CD4-positive, alpha-beta T cell (primary cell): ENCODE measurements at regions of chr3 and their contacts with region 1.

Region 1: DNA sequence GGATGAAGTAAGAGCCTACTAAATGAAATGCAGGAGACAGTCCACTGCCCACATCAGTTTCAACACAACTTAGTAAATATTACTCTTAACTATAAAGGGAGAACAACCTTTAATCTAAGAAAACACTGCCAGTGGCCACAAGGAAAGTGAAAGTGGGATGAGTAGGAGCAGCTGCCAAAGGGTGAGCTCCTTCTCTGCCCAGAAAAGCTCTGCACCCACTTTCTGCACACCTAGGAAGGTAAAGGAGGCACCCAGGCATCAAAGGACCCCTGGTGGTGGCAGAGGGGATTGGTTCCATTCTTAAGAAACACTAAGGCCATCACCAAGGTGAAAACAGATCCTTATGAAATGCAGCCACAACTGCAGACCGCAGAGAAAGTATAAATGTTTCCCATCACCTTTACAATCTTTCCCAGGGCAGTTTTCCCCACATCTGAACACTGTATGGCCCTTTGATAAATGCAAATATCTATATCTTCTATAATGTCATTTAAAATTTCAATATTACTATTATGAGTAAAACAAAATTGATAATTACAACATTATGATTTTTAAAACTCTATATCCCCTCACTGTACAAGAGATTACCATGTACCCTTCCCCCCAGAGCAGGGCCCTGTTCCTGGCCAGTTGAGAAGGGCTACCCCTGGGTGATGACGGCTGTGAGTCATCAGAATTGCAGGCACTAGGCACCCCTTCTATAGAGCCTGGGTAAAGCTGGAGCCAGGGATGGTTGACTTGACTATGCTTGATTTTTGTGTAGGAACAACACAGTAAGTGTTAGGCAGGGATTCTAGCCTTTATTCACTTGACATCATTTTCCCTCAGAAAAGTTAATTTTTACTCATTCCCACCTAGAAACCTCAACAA is 92.0 kb downstream of the SNRK start:
- DNase-seq: peak; percentile 62 to 86 (median 68)
- ATAC-seq: peak; percentile 99
- H3K4me3 ChIP-seq: no peak overlapping the region
- H3K4me3 Mint-ChIP-seq: no peak overlapping the region
- H3K27ac ChIP-seq: no peak overlapping the region
- H3K27ac Mint-ChIP-seq: peak overlapping the region; percentile 50
- H3K4me1 ChIP-seq: peaks cover 16% of the 10 kb centered on the region
- H3K4me1 Mint-ChIP-seq: peaks cover 17% of the 10 kb centered on the region
- H3K27me3 ChIP-seq: no peaks in the 10 kb centered on the region
- H3K27me3 Mint-ChIP-seq: no peaks in the 10 kb centered on the region
- CTCF ChIP-seq: peak; percentile 86

Region 2: GRCh38 chr3:43215663-43216275 is 162.5 kb before region 1 on chr3:
- CTCF ChIA-PET with region 1: no interaction called
- POLR2A ChIA-PET with region 1: no interaction called
- intact Hi-C with region 1: loop called in 1 of 2 experiments (anchors 2 kb)
- DNase-seq: peak in 4 of 14 experiments; percentile 19 to 35 (median 28)
- ATAC-seq: peak; percentile 45
- H3K4me3 ChIP-seq: no peak overlapping the region
- H3K4me3 Mint-ChIP-seq: peak overlapping the region; percentile 26
- H3K27ac ChIP-seq: no peak overlapping the region
- H3K27ac Mint-ChIP-seq: peak overlapping the region; percentile 75
- H3K4me1 ChIP-seq: peaks cover 23% of the 10 kb centered on the region
- H3K4me1 Mint-ChIP-seq: peaks cover 54% of the 10 kb centered on the region
- H3K27me3 ChIP-seq: no peaks in the 10 kb centered on the region
- H3K27me3 Mint-ChIP-seq: no peaks in the 10 kb centered on the region
- CTCF ChIP-seq: no peak

Region 3: DNA sequence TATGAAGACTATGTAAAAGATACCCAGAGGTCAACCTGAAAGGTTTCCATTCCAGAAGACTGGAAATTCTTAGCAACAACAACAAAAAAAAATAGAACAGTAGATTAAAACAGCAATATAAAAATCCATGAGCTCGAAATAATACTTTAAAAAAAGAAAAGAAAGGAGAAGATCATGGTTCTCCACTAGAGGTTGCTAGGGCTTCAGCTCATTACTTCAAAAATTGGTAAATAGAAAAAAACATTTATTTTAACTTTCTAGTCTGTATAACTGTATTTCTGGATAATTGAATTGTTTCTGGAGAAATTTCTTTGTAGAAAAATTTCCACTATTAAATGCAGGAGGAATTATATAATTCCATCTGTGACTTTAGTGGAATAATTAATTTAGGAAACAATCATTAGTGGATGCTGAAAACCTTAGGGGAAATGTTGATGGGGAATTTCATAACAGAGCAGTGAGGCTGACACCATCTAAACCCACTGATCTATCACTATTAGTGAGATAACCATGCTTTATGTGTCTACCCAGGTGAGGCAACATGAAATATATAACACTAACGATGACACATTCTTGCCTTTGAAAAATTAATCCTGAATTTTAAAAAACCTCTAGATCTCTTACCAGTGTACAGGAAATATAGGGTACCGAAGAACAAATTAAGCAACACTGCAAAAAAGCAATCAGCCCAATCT is 154.5 kb before region 1 on chr3:
- CTCF ChIA-PET with region 1: interaction called, 9 read pairs
- POLR2A ChIA-PET with region 1: interaction called, 3 read pairs
- intact Hi-C with region 1: loop called (anchors 1 kb)
- DNase-seq: peak in 3 of 14 experiments; percentile 49 to 56 (median 52)
- ATAC-seq: no peak
- H3K4me3 ChIP-seq: no peak overlapping the region
- H3K4me3 Mint-ChIP-seq: peak overlapping the region; percentile 2
- H3K27ac ChIP-seq: no peak overlapping the region
- H3K27ac Mint-ChIP-seq: peak overlapping the region; percentile 86
- H3K4me1 ChIP-seq: peaks cover 28% of the 10 kb centered on the region
- H3K4me1 Mint-ChIP-seq: peaks cover 60% of the 10 kb centered on the region
- H3K27me3 ChIP-seq: no peaks in the 10 kb centered on the region
- H3K27me3 Mint-ChIP-seq: no peaks in the 10 kb centered on the region
- CTCF ChIP-seq: peak; percentile 65

Region 4: DNA sequence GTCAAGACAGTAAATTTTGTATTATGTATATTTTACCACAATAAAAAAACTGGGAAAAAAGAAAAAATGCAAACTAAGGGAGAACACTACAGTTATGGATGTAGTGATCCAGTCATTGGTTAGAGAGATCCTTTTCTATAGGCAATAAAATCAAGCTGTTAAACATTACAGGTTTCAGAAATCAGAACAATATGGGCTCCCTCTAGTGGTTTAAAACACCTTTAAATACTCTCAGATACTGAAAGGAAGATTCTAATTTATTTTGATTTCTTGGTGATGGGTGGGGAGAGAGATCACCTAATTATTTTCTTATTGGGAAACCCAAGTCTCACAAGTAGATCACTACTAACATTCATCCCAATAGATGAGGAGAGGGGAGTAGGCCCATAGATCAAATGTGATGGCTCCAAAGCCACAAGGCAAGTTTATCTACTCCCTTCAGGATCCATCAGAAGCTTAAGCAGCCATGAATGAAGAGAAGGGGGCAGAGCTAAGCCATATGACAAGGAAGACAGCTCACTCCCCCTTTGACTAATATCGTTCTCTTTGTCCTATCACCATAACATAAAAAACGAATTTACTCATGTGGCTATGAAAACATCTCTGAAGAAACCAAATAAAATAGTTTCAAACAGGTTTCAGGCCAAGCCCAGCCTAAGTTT is 124.9 kb after region 1 on chr3:
- CTCF ChIA-PET with region 1: interaction called, 11 read pairs
- POLR2A ChIA-PET with region 1: interaction called, 3 read pairs
- intact Hi-C with region 1: loop called (anchors 1 to 2 kb)
- DNase-seq: peak in 3 of 14 experiments; percentile 64 to 71 (median 67)
- ATAC-seq: peak; percentile 63
- H3K4me3 ChIP-seq: no peak overlapping the region
- H3K4me3 Mint-ChIP-seq: no peak overlapping the region
- H3K27ac ChIP-seq: no peak overlapping the region
- H3K27ac Mint-ChIP-seq: peak overlapping the region; percentile 31
- H3K4me1 ChIP-seq: peaks cover 26% of the 10 kb centered on the region
- H3K4me1 Mint-ChIP-seq: peaks cover 50% of the 10 kb centered on the region
- H3K27me3 ChIP-seq: no peaks in the 10 kb centered on the region
- H3K27me3 Mint-ChIP-seq: no peaks in the 10 kb centered on the region
- CTCF ChIP-seq: peak; percentile 68